Endothelial cell of umbilical vein (primary cell): ENCODE measurements at regions of chr2 and their contacts with region 1.

Region 1: GRCh38 chr2:20595431-20596192 is 55.3 kb downstream of the HS1BP3 start:
- DNase-seq: peak; percentile 65
- H3K4me3 ChIP-seq: no peak overlapping the region
- H3K27ac ChIP-seq: peak overlapping the region; percentile 95
- H3K4me1 ChIP-seq: peaks cover 56% of the 10 kb centered on the region
- H3K27me3 ChIP-seq: no peaks in the 10 kb centered on the region
- CTCF ChIP-seq: no peak
- POLR2A ChIP-seq: peak; percentile 43

Region 2: GRCh38 chr2:20568501-20569463 is 26.8 kb before region 1 on chr2:
- CTCF ChIA-PET with region 1: interaction called, 23 read pairs
- POLR2A ChIA-PET with region 1: interaction called, 9 read pairs
- dilution Hi-C with region 1: no loop called
- intact Hi-C with region 1: loop called (anchors 1 kb)
- DNase-seq: peak; percentile 98
- H3K4me3 ChIP-seq: no peak overlapping the region
- H3K27ac ChIP-seq: peak overlapping the region; percentile 100
- H3K4me1 ChIP-seq: peaks cover 72% of the 10 kb centered on the region
- H3K27me3 ChIP-seq: no peaks in the 10 kb centered on the region
- CTCF ChIP-seq: no peak
- POLR2A ChIP-seq: peak; percentile 72

Region 3: DNA sequence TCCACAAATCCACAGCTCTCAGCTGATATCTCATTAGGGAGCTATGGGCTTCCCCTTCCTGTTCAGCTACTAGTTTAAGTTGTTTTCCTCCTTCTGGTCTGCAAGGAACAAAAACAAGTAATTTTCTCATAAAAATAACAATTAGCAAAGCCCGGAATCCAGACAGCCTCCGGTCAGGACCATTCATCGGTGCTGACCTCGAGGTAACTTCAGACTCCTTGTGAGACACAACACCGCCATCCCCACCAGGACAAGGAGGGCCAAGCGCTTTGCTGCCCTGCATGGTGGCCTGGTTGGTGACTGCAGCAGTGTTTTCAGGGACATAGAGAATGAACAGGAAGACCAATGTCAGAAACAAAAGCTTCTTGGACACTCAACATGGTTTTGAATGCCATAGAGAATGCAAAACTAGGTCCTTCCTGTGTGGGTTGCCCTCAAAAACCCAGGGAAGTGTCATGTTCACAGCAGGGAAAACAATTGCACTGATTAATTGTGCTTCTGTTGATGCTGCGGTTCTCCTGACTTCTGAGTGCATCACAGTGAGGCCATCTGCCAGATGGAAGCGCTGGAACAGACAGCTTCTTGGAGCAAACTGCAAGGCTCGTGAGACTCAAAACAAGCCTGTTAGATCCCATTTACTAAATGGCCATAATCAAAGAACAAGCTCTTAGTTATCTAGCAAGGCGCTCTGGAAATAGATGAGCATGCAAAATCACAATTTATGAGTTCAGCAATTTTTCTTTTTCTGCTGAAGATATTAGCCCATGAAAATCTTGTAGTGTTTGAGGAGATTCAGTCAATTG is 21.8 kb before region 1 on chr2:
- CTCF ChIA-PET with region 1: interaction called, 23 read pairs
- POLR2A ChIA-PET with region 1: interaction called, 16 read pairs
- dilution Hi-C with region 1: no loop called
- intact Hi-C with region 1: loop called (anchors 1 kb)
- DNase-seq: peak; percentile 98
- H3K4me3 ChIP-seq: no peak overlapping the region
- H3K27ac ChIP-seq: peak overlapping the region; percentile 100
- H3K4me1 ChIP-seq: peaks cover 98% of the 10 kb centered on the region
- H3K27me3 ChIP-seq: no peaks in the 10 kb centered on the region
- CTCF ChIP-seq: no peak
- POLR2A ChIP-seq: no peak

Region 4: DNA sequence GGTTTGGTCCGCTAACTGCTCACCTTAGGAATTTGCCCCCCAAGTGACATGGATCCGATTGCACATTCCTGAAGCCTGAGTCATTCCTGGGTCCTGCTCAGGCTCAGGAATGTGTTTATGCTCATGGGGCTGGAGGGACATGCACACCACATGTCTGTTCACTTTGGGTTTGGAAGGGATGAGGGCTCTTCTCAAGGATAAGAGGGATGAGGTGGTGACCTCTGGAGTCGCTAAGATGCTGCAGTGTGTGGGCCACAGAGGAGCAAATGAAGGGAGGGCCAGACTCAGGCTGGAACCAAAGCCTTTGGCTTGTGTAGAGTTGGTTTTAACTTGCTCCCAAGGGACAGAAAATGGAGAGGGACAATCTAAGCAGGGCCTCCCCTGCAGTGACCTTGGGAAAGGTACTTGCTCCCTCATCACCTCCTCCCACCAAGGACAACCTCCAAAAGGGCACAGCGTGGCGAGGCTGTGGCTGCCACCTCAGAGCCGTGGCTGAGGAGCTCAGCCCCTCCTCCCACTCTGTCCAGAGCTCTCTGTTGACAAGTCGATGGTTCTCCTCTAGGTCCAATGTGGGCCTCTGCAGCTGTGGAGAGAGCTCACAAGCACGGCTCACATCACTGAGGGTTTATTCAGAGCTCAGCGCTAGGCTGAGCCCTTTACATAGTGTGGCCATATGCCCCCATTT is 10.8 kb before region 1 on chr2:
- CTCF ChIA-PET with region 1: interaction called, 13 read pairs
- POLR2A ChIA-PET with region 1: interaction called, 16 read pairs
- dilution Hi-C with region 1: no loop called
- intact Hi-C with region 1: loop called (anchors 1 kb)
- DNase-seq: peak; percentile 89
- H3K4me3 ChIP-seq: no peak overlapping the region
- H3K27ac ChIP-seq: peak overlapping the region; percentile 76
- H3K4me1 ChIP-seq: peaks cover 43% of the 10 kb centered on the region
- H3K27me3 ChIP-seq: no peaks in the 10 kb centered on the region
- CTCF ChIP-seq: no peak
- POLR2A ChIP-seq: peak; percentile 24

Region 5: DNA sequence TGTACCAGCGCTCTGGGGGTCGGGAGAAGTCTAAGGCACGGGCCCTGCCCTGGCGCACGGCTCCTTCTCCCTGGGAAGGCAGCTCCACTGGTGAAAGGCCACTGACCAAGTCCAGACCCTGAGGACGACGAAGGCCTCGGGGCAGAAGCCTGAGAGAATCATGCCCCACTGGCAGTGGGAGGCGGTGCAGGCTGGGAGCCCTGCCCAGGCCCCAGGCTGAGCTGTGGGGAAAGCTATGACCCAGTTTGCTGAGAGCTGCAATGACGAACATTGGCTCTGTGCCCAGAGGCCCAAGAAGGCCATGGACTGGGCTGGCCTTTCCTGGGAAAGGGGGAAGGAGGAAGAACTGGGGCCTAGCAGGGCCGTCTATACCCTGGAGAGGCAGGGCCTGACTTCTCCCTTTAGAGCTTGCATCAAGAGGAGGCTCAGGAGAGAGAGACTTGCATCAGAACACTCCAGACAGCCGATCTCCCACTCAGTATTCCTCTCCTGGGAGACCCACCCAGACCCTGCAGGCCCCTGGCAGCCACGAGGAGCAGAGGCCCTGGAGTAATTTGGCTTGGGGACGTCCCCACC is 22.4 kb after region 1 on chr2:
- CTCF ChIA-PET with region 1: interaction called, 15 read pairs
- POLR2A ChIA-PET with region 1: interaction called, 7 read pairs
- dilution Hi-C with region 1: no loop called
- intact Hi-C with region 1: loop called (anchors 1 kb)
- DNase-seq: peak; percentile 98
- H3K4me3 ChIP-seq: no peak overlapping the region
- H3K27ac ChIP-seq: peak overlapping the region; percentile 77
- H3K4me1 ChIP-seq: peaks cover 34% of the 10 kb centered on the region
- H3K27me3 ChIP-seq: no peaks in the 10 kb centered on the region
- CTCF ChIP-seq: peak; percentile 34 to 67
- POLR2A ChIP-seq: no peak

Region 6: GRCh38 chr2:20661067-20661980 is 65.7 kb after region 1 on chr2:
- CTCF ChIA-PET with region 1: no interaction called
- POLR2A ChIA-PET with region 1: no interaction called
- dilution Hi-C with region 1: no loop called
- intact Hi-C with region 1: no loop called
- DNase-seq: peak; percentile 80
- H3K4me3 ChIP-seq: no peak overlapping the region
- H3K27ac ChIP-seq: no peak overlapping the region
- H3K4me1 ChIP-seq: peaks cover 8% of the 10 kb centered on the region
- H3K27me3 ChIP-seq: peaks cover 57 to 64% of the 10 kb centered on the region in 2 experiments
- CTCF ChIP-seq: peak; percentile 88 to 92
- POLR2A ChIP-seq: peak; percentile 45